OCI-LY7 (cell line): ENCODE measurements at regions of chr7 and their contacts with region 1.

Region 1: DNA sequence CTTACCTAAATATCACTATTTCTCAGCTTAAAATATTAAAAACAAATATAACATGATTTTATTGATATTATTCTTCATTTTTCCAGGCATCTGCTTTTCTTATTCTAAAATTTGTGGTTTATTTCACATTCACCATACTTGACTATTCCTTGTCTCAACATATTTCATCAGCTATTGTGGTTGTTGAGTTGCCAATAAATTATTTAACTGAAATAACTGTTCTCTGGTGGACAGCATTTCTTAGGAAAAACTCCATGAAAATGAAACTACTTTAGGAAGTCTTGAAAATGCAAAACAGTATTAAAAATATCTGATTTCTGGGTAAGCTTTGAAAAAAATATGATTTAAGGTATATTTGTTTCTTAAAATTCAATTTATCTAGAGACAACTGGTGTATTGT is 122.9 kb upstream of the SEMA3A start:
- DNase-seq: no peak
- H3K4me3 ChIP-seq: no peak overlapping the region
- H3K27ac ChIP-seq: no peak overlapping the region
- H3K4me1 ChIP-seq: no peaks in the 10 kb centered on the region
- CTCF ChIP-seq: no peak

Region 2: DNA sequence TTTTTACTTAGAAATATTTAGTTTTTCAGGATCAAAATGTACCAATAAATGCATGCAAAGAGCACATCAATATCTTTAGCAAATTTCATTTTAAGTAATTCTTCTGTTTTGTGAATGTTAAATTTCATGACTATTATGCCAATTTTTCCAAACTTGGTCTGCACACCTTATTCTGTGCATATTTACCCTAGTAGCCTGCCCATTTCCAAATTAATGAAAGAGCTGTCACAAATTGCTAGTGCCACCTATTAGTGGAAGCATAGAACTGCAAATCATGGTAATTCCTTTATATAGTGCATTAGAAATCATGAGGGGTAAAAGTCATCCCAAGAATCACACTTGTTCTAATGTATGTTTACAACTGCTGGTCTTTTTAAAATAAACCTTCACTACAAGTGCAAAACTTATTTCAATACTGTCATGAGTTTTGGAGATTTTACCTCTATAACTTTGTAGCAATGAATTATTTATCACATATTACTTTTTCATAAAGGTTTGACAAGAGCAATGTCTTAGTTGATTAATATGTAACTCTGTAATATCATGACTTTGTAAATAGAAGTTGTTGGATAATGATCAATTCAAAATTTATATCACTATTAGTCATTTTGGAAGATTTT is 128.6 kb before region 1 on chr7:
- CTCF ChIA-PET with region 1: no interaction called
- POLR2A ChIA-PET with region 1: no interaction called
- intact Hi-C with region 1: no loop called
- DNase-seq: no peak
- H3K4me3 ChIP-seq: no peak overlapping the region
- H3K27ac ChIP-seq: no peak overlapping the region
- H3K4me1 ChIP-seq: no peaks in the 10 kb centered on the region
- CTCF ChIP-seq: peak; percentile 64

Region 3: DNA sequence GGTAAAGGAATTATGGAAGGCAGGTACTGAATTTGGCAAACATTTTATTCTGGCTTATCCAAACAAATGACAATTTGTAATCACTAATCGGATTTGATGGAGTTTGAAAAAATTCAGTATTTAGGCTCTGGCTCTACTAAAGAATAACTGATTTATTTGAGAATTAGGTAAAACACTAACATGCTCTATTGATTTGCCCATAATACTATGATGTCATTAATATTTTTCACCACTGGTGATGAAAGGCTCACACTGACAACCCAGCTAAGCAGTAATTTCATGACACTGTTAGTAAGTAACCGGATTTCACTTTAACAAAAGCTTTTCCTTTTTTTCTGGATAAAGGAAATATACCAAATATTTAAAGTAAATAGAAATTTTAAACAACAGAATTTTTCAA is 10.1 kb before region 1 on chr7:
- CTCF ChIA-PET with region 1: no interaction called
- POLR2A ChIA-PET with region 1: interaction called, 10 read pairs
- intact Hi-C with region 1: no loop called
- DNase-seq: no peak
- H3K4me3 ChIP-seq: no peak overlapping the region
- H3K27ac ChIP-seq: no peak overlapping the region
- H3K4me1 ChIP-seq: no peaks in the 10 kb centered on the region
- CTCF ChIP-seq: no peak